ENCODE measurements at regions of chr7 and their contacts with region 1.

Region 1: DNA sequence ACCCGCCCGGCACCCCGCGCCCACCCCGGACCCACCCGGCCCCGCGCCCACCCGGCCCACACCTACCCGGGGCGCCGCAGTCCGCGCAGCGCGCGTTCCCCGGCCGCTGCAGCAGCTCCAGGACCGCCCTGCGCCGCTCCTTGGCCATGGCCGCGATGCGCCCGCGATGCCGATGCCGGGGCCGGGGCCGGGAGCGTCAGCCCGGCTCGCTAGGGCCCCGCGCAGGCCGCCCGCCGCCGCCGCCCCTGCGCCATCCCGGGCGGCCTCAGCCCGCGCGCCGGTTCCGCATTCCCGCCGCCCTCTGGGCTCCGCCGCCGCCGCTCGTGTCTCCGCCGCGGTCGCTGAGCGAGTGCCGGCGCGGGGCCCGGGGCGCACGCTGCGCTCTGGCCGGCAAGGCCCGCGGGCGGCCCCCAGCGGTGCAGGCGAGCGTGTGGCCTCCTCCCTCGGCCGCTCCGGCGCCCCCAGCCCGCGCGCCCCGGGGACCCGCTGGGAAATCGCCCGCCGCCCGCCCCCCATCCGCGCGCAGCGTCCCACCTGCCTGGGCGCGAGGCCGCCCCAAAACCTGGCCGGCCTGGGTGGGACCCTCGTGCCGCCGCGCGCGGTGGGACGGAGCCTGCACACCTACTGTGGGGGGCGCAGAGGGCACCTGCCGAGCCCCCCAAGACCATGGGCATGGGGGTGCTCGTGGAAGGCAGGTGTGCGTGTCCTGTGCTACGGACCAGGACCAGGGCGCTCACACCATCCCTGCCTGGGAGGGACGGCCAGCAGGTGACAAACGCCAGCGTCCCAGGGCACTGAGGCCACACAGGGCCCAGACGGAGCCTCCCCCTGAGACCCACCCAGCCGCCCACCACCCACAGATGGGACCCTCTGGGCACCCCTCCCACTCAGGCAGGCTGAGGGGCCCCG is at the start of gene ADAP1:
- DNase-seq: peak in 6 of 10 donors; percentile 49 to 95 (median 78)

Region 2: GRCh38 chr7:913736-914516 is 40.7 kb before region 1 on chr7:
- intact Hi-C with region 1: loop called (anchors 2 kb)
- DNase-seq: peak in 7 of 10 donors; percentile 60 to 95 (median 80)